ENCODE measurements at regions of chr10 and their contacts with region 1.

Region 1: GRCh38 chr10:64977915-64978314 is 1456.7 kb downstream of the REEP3 start:
- DNase-seq: peak; percentile 58
- ATAC-seq: peak; percentile 29; the same call in 1 of the 2 replicates
- H3K4me3 ChIP-seq: no peak overlapping the region
- H3K27ac ChIP-seq: no peak overlapping the region
- H3K4me1 ChIP-seq: no peaks in the 10 kb centered on the region
- H3K27me3 ChIP-seq: no peaks in the 10 kb centered on the region
- CTCF ChIP-seq: peak; percentile 60

Region 2: GRCh38 chr10:64486149-64486548 is 491.8 kb before region 1 on chr10:
- CTCF ChIA-PET with region 1: no interaction called
- POLR2A ChIA-PET with region 1: no interaction called
- intact Hi-C with region 1: no loop called
- DNase-seq: peak; percentile 76
- ATAC-seq: peak; percentile 91
- H3K4me3 ChIP-seq: no peak overlapping the region
- H3K27ac ChIP-seq: no peak overlapping the region
- H3K4me1 ChIP-seq: peaks cover 10% of the 10 kb centered on the region; the same call in 1 of the 2 replicates
- H3K27me3 ChIP-seq: no peaks in the 10 kb centered on the region
- CTCF ChIP-seq: no peak

Region 3: DNA sequence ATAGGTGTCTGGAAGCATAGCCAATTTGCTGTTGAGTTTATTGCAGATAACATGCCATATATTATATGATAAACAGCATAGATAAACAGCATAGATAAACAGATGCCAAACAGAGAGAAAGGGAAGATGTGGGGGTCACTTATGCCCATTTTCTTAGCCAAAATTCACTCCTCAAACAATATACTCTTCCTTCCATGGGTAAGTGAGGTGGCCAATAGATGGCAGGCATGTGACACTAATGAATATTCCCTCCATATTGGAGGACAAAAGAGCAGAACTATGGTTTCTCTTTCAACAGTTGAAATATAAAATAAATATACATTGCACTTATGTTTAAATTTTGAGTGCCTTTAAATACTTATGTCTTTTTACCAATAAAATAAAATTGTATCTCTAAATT is 243.9 kb before region 1 on chr10:
- CTCF ChIA-PET with region 1: no interaction called
- POLR2A ChIA-PET with region 1: no interaction called
- intact Hi-C with region 1: loop called (anchors 2 kb)
- DNase-seq: peak; percentile 86
- ATAC-seq: peak; percentile 84
- H3K4me3 ChIP-seq: no peak overlapping the region
- H3K27ac ChIP-seq: no peak overlapping the region
- H3K4me1 ChIP-seq: peaks cover 11% of the 10 kb centered on the region
- H3K27me3 ChIP-seq: no peaks in the 10 kb centered on the region
- CTCF ChIP-seq: peak; percentile 91

Region 4: GRCh38 chr10:65341323-65341925 is 363.5 kb after region 1 on chr10:
- CTCF ChIA-PET with region 1: interaction called, 3 read pairs
- POLR2A ChIA-PET with region 1: no interaction called
- intact Hi-C with region 1: loop called (anchors 5 kb)
- DNase-seq: peak; percentile 90
- ATAC-seq: peak; percentile 90
- H3K4me3 ChIP-seq: no peak overlapping the region
- H3K27ac ChIP-seq: peak overlapping the region; percentile 29
- H3K4me1 ChIP-seq: peaks cover 27% of the 10 kb centered on the region
- H3K27me3 ChIP-seq: no peaks in the 10 kb centered on the region
- CTCF ChIP-seq: no peak

Region 5: DNA sequence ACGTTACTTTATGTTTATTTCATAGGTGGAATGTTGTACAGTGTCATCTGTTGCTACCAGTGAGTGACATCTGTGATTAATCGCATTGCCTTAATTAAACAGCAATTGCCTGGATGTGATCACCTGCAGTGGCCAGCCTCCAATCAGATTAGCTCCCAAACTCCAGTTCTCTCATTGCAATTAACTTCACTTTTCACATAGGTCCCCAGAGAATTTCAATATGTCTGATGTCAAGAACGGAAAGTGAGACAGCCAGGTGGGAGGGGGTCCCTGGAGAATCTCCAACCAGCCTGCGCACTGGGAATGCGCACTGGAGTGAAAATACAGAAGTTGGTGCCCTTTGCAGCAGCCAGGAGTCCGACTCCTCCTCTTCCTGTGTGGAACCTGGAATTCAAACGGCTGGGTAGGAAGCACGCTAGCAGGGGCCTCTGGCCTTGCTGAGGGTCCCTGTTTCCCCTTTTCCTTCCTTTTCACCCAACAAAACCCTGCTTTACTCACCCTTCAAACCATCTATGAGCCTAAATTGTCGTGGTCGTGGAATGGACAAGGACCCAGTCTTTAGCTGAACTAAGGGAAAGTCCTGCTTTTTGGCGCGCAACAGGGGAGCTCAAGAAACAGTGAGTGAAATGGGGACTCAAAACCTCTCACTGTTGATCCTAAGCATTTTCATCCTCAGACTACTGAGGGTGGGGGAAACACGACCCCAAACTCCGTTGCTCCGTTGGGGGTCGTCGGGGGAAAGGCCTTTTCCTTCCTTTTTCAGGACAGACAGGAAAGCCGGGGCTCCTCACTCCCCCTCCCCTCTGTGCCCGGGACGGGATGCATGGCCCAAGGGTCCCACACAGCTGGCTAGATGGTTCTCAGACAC is 592.5 kb after region 1 on chr10:
- CTCF ChIA-PET with region 1: no interaction called
- POLR2A ChIA-PET with region 1: no interaction called
- intact Hi-C with region 1: loop called (anchors 10 kb)
- DNase-seq: peak; percentile 89
- ATAC-seq: peak; percentile 93
- H3K4me3 ChIP-seq: peak overlapping the region; percentile 78
- H3K27ac ChIP-seq: peak overlapping the region; percentile 45
- H3K4me1 ChIP-seq: peaks cover 15% of the 10 kb centered on the region
- H3K27me3 ChIP-seq: no peaks in the 10 kb centered on the region
- CTCF ChIP-seq: no peak

Region 6: DNA sequence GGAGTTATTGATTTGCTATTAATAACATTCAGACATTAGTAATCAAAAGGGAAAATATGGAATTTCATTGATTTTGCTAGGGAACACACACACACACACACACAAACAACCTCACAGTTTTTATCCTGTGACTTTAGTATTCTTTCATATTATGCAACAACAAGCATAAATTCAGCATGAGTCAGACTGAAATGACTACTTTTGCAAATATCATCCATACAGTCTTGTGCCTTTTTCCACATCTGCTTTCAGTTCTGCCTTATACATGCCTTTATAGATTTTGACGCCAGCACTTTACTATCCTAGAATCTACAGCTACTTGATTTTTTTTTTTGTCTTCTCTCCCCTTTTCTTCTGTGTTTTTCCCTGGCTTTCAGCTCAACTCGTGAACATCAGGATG is 972.2 kb after region 1 on chr10:
- CTCF ChIA-PET with region 1: no interaction called
- POLR2A ChIA-PET with region 1: no interaction called
- intact Hi-C with region 1: loop called (anchors 5 kb)
- DNase-seq: peak; percentile 84
- ATAC-seq: peak; percentile 90
- H3K4me3 ChIP-seq: no peak overlapping the region
- H3K27ac ChIP-seq: no peak overlapping the region
- H3K4me1 ChIP-seq: peaks cover 4% of the 10 kb centered on the region; the same call in 1 of the 2 replicates
- H3K27me3 ChIP-seq: no peaks in the 10 kb centered on the region
- CTCF ChIP-seq: no peak

Region 7: DNA sequence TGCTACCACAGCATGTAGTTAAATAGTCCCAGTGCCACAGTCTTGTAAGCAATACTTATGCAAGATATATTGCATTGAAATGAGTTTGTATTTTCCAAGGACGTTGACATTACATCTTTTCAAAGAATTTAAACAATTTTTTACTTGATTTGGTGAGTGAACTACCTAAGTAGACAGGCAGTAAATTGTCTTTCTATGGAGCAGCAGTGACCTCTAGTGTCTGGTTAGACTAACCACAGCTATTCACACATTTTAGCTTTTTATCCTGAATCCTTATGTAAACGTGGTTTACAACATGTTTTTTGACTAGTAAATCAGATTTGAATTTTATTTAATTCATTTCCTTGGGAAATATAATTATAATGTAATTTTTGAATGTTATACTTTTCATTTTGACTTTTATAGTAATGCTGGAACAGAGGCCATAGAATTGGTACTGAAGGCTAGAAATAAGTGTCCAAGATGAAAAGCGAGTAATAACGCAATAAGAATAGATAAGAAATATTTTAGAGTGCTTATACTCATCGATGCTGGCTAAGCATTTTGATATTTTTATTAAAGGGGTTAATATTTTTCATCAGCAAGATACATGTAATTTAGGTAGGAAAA is 1953.5 kb after region 1 on chr10:
- CTCF ChIA-PET with region 1: no interaction called
- POLR2A ChIA-PET with region 1: no interaction called
- intact Hi-C with region 1: loop called (anchors 2 kb)
- DNase-seq: peak; percentile 97
- ATAC-seq: peak; percentile 78
- H3K4me3 ChIP-seq: no peak overlapping the region
- H3K27ac ChIP-seq: no peak overlapping the region
- H3K4me1 ChIP-seq: peaks cover 3% of the 10 kb centered on the region; the same call in 1 of the 2 replicates
- H3K27me3 ChIP-seq: peaks cover 33% of the 10 kb centered on the region
- CTCF ChIP-seq: peak; percentile 100